PC-9 (cell line): ENCODE measurements at regions of chr10 and their contacts with region 1.

Region 1: GRCh38 chr10:50325449-50326171 is 74.3 kb upstream of the ASAH2 start:
- DNase-seq: peak; percentile 35 to 88
- H3K4me3 ChIP-seq: no peak overlapping the region
- H3K27ac ChIP-seq: peak overlapping the region; percentile 62
- H3K4me1 ChIP-seq: peaks cover 24% of the 10 kb centered on the region
- H3K27me3 ChIP-seq: no peaks in the 10 kb centered on the region
- CTCF ChIP-seq: no peak

Region 2: GRCh38 chr10:49632406-49633317 is 692.9 kb before region 1 on chr10:
- CTCF ChIA-PET with region 1: no interaction called
- POLR2A ChIA-PET with region 1: no interaction called
- intact Hi-C with region 1: no loop called
- DNase-seq: peak in 1 of 2 experiments; percentile 43
- H3K4me3 ChIP-seq: no peak overlapping the region
- H3K27ac ChIP-seq: no peak overlapping the region
- H3K4me1 ChIP-seq: peaks cover 6% of the 10 kb centered on the region; the same call in 1 of the 2 replicates
- H3K27me3 ChIP-seq: no peaks in the 10 kb centered on the region
- CTCF ChIP-seq: no peak

Region 3: DNA sequence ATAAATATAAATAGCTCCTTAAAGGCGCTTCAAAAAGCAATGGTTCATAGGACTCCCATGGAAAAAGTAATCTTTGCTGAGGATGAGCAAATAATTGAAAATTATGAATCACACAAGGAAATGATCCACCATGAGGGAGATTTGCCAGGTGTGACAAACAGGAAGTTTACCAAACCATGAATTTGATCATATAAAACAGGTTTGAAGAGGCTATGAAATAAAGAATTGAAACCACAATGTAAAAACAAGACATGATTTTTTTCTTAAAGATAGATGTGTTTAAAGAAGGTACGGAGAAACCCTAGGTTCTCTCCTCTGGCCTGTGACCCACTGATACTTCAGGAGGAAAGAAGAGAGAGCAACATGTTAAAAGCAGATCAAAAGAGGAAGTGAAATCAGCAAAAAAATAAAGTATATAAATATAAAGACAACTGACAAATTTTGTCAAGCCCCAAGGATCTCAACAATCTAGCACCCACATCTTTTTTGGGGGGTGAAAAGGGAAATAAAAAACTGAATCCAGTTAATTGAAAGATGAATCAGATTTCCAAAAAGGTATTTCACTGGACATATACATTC is 37.0 kb after region 1 on chr10:
- CTCF ChIA-PET with region 1: no interaction called
- POLR2A ChIA-PET with region 1: no interaction called
- intact Hi-C with region 1: loop called (anchors 5 kb)
- DNase-seq: peak; percentile 5 to 90
- H3K4me3 ChIP-seq: 0 out of 2 replicates have a peak overlapping the region, but pooled peaks have one; percentile 5
- H3K27ac ChIP-seq: peak overlapping the region; percentile 83
- H3K4me1 ChIP-seq: peaks cover 39% of the 10 kb centered on the region
- H3K27me3 ChIP-seq: no peaks in the 10 kb centered on the region
- CTCF ChIP-seq: no peak

Region 4: DNA sequence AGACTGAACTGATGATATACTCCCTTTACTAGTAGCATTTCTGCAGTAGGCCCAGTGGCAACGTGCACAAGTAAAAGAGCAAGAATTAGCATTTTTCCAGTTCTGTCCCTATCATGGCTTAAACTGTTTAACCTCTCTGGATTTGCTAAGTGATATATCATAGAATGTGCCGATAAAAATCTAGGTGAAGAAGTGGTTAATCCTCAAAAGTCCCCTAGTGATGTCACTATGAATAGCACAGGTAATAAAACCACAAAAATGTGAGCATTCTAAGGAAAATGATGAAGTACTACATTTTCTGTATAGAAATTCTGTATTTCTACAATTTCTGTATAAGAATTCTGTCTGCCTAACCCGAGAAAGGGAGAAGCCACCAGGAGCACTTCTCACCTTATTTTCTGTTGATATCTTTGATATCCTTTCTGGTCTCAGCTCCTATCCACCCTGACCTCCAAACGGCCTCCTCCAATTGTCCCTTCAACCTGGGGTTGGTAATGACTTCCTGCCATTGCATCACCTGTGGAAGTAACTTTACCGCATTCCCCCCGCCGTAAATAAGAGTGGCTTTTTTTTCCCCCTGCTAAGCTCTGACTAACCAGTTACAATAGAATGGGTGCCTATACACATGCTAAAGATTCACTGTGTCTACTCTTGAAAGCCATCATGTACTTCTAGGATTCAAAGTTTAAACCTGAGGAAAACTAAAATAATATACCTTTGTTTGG is 81.6 kb after region 1 on chr10:
- CTCF ChIA-PET with region 1: no interaction called
- POLR2A ChIA-PET with region 1: no interaction called
- intact Hi-C with region 1: loop called (anchors 5 kb)
- DNase-seq: peak; percentile 53 to 90
- H3K4me3 ChIP-seq: peak overlapping the region; percentile 21; the same call in 1 of the 2 replicates
- H3K27ac ChIP-seq: peak overlapping the region; percentile 93
- H3K4me1 ChIP-seq: peaks cover 100% of the 10 kb centered on the region
- H3K27me3 ChIP-seq: no peaks in the 10 kb centered on the region
- CTCF ChIP-seq: 0 out of 2 replicates have a peak, but pooled peaks have one; percentile 5

Region 5: DNA sequence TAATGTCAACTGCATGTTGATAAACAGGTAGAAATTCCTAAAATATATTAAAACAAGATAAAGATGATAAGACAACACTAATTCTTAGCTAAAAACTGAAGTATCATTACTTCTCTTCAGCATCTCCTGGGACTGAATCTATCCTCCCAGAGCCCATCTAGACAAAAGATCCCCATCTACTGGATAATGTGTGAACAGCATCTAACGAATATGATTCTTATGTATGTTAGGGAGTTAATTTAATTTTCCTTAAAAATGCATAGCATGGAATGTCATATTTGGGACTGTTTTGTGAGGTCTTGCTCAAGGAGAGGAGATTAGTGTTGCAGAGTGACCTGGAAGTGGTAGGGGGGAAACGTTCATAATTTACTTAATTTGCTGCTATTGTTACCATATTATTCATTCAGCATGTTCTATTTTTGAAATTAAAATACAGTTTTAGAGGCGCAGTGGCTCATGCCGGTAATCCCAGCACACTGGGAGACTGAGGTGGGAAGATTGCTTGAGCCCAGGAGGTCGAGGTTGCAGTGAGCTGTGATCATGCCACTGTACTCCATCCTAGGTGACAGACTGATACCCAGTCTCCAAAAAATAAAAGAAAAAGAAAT is 1678.8 kb after region 1 on chr10:
- CTCF ChIA-PET with region 1: no interaction called
- POLR2A ChIA-PET with region 1: no interaction called
- intact Hi-C with region 1: no loop called
- DNase-seq: no peak
- H3K4me3 ChIP-seq: no peak overlapping the region
- H3K27ac ChIP-seq: no peak overlapping the region
- H3K4me1 ChIP-seq: no peaks in the 10 kb centered on the region
- H3K27me3 ChIP-seq: no peaks in the 10 kb centered on the region
- CTCF ChIP-seq: peak; percentile 78